ENCODE measurements at regions of chr9 and their contacts with region 1.

Region 1: DNA sequence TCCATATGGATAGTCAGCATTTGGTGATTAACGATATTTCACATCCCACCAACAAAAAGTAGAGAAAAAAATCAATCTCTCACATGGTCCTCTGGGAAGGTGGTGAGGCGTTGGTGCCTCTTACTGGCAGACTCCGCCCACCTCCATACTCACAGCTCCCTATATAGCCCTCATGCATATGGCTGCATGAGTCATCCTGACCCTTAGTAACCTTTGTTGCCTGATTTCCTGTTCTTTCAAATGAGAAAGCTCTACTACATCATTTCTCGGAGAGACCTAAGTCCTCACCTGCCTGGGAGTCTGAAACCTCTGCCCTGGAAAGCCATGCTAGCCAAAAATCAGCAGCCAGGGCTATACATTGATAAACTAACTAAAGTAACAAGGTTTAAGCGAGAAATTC is 33.3 kb upstream of the ABCA1 start:
- DNase-seq: peak; percentile 83
- H3K4me3 Mint-ChIP-seq: no peak overlapping the region
- H3K27ac Mint-ChIP-seq: peak overlapping the region; percentile 85
- H3K4me1 Mint-ChIP-seq: peaks cover 31% of the 10 kb centered on the region
- H3K27me3 Mint-ChIP-seq: no peaks in the 10 kb centered on the region

Region 2: DNA sequence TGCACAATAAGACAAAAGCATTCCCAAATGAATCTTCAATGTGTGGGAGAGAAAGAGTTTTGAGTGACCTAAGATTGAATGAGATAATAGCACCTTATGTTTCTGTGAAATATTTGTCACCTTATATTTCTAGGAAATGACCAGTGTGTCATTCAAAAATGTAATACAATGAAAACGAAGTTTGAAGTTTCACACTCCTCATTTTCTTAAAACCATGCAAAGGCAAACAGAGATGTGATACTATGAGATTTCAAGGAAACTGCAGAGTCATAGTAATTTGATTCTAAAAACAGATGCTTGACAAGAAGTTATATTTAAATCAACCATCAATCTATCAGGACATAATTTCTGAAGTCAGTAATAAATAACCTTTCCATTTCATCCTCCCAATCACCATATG is 19.6 kb before region 1 on chr9:
- CTCF ChIA-PET with region 1: no interaction called
- POLR2A ChIA-PET with region 1: no interaction called
- intact Hi-C with region 1: loop called (anchors 1 kb)
- DNase-seq: no peak
- H3K4me3 Mint-ChIP-seq: no peak overlapping the region
- H3K27ac Mint-ChIP-seq: peak overlapping the region; percentile 62
- H3K4me1 Mint-ChIP-seq: peaks cover 14% of the 10 kb centered on the region
- H3K27me3 Mint-ChIP-seq: no peaks in the 10 kb centered on the region

Region 3: GRCh38 chr9:104984121-104984520 is 22.9 kb after region 1 on chr9:
- CTCF ChIA-PET with region 1: interaction called, 3 read pairs
- POLR2A ChIA-PET with region 1: interaction called, 5 read pairs
- intact Hi-C with region 1: loop called (anchors 1 kb)
- DNase-seq: no peak
- H3K4me3 Mint-ChIP-seq: no peak overlapping the region
- H3K27ac Mint-ChIP-seq: peak overlapping the region; percentile 68
- H3K4me1 Mint-ChIP-seq: peaks cover 42% of the 10 kb centered on the region
- H3K27me3 Mint-ChIP-seq: peaks cover 25% of the 10 kb centered on the region

Measured in activated CD4-positive, alpha-beta memory T cell treated with anti-CD3 and anti-CD28 coated beads for 36 hours (primary cell).